OCI-LY7 (cell line): ENCODE measurements at regions of chr1 and their contacts with region 1.

Region 1: GRCh38 chr1:167467126-167467710 is 51.1 kb downstream of the CD247 start:
- DNase-seq: no peak
- H3K4me3 ChIP-seq: no peak overlapping the region
- H3K27ac ChIP-seq: no peak overlapping the region
- H3K4me1 ChIP-seq: no peaks in the 10 kb centered on the region
- CTCF ChIP-seq: no peak

Region 2: GRCh38 chr1:167301355-167301754 is 165.9 kb before region 1 on chr1:
- CTCF ChIA-PET with region 1: no interaction called
- POLR2A ChIA-PET with region 1: no interaction called
- intact Hi-C with region 1: no loop called
- DNase-seq: peak; percentile 48
- H3K4me3 ChIP-seq: no peak overlapping the region
- H3K27ac ChIP-seq: no peak overlapping the region
- H3K4me1 ChIP-seq: peaks cover 9% of the 10 kb centered on the region
- CTCF ChIP-seq: no peak

Region 3: DNA sequence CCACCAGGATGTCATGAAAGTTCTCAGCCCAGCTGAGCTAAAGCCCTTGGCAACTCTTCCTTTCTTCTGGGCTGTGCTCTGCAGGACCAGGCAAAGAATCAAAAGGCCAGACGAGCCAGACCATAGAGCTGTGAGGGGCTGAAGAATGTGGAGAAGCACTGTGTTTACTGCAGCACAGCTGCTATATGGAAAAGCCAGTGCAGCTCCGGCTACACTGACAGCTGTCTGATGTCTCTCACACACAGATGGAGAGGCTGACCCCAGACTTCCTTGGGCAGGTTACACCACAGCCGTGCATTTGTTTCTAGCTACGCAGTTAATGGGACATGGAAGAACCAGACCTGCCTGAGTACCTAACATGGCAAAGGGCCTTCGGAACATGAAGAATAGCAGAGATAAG is 10.8 kb after region 1 on chr1:
- CTCF ChIA-PET with region 1: no interaction called
- POLR2A ChIA-PET with region 1: interaction called, 11 read pairs
- intact Hi-C with region 1: no loop called
- DNase-seq: no peak
- H3K4me3 ChIP-seq: no peak overlapping the region
- H3K27ac ChIP-seq: no peak overlapping the region
- H3K4me1 ChIP-seq: peaks cover 14% of the 10 kb centered on the region
- CTCF ChIP-seq: no peak